Right ventricle myocardium inferior (tissue), 1 donor: ENCODE measurements at regions of chr11 and their contacts with region 1.

Region 1: DNA sequence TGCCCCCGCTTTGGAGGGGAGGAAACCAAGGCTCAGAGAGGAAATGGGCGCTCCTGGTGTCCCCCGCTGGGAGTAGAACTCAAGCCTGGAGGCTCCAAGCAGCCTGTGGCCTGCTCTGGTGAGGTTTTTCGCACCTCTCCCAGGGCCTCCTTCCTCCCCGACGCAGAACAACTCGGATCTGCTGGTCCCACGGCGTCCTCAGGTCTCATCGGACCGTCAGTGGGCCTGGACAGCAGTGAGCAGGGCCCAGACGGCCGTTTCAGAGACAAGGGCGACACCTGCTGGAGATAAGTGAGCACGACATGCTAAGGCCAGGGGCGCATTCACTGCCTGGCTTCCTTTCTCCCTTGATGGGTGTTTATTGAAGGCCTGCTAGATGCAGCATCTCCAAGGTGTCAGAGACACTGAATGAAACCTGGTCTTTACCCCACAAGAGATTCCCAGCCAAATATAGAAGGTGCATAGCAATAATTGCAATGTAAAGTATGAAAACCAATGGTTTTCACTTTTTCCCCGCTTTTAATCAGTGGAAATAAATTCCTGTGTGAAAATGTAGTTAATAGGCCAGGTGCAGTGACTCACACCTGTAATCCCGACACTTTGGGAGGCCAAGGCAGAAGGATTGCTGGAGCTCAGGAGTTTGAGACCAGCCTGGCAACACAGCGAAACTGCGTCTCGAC is 26.9 kb upstream of the CD82 start:
- DNase-seq: peak; percentile 91
- ATAC-seq: peak; percentile 95

Region 2: GRCh38 chr11:44095506-44096394 is 442.8 kb before region 1 on chr11 and contains the start of gene EXT2:
- intact Hi-C with region 1: loop called (anchors 2 kb)
- DNase-seq: peak; percentile 94
- ATAC-seq: peak; percentile 98
- total RNA-seq, gene EXT2: 30.7 TPM

Region 3: GRCh38 chr11:44110231-44110679 is 428.3 kb before region 1 on chr11:
- intact Hi-C with region 1: loop called (anchors 5 kb)
- DNase-seq: no peak
- ATAC-seq: peak; percentile 76

Region 4: DNA sequence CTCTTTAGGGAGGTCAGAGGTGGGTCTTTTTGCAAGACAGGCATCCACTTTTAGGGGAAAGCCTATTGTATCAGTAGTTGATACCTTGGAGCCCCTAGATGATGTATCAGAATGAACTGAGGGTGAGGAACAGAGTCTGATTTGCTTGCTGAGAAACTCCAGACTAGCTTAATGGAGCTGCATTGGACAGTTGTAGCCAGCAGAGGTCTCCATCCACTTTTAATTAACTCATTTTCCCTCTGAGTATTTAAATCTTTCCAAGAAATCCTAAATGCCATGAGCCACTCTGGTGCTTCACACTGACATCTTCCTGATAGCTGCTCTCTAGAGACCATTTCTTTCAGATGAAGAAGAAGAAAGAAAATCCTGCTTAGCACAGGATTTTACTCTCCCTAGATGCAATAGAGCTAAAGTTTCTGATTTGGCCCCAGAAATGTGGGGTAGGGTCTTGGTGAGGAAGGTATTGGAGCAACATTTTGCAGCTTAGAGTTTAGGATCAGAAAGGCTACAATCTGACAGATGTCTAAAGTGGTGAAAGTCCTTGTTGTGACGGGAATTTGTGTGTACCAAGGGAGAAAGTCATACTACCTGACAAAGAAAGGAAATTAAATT is 405.1 kb before region 1 on chr11:
- intact Hi-C with region 1: loop called (anchors 5 kb)
- DNase-seq: no peak
- ATAC-seq: peak; percentile 67

Region 5: DNA sequence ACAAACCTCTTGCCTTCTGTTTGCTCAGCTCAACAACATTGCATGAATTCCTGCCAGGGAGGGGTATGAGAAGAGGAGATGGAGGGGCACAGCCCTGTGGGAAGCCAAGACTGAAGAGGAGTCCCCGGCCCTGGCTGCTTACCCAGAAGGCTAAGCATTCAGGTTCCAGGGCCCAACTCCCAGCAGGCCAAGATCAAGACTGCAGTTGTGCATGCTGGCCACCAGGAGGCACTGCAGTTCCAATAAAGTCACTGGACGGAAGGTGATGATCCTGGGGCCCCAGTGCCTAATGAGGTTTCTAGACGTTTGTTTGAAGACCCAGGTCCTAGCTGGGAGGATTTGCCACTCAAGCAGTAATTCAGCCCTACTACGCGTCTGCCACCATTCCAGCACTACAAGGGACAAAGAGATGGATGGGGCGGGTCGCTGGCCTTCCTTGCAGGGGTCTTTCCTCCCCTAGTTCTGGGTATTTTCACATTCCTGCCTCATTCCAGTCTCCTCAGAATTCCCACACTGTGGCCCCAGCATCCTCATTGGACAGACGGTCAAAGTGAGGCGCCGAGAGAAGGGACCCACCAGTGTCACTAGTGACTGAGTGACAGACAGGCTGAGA is 252.1 kb before region 1 on chr11:
- intact Hi-C with region 1: loop called (anchors 1 kb)
- DNase-seq: no peak
- ATAC-seq: peak; percentile 49

Region 6: GRCh38 chr11:44596525-44597276 is 58.2 kb after region 1 on chr11:
- intact Hi-C with region 1: no loop called
- DNase-seq: no peak
- ATAC-seq: peak; percentile 3